ENCODE measurements at regions of chr6 and their contacts with region 1.

Region 1: DNA sequence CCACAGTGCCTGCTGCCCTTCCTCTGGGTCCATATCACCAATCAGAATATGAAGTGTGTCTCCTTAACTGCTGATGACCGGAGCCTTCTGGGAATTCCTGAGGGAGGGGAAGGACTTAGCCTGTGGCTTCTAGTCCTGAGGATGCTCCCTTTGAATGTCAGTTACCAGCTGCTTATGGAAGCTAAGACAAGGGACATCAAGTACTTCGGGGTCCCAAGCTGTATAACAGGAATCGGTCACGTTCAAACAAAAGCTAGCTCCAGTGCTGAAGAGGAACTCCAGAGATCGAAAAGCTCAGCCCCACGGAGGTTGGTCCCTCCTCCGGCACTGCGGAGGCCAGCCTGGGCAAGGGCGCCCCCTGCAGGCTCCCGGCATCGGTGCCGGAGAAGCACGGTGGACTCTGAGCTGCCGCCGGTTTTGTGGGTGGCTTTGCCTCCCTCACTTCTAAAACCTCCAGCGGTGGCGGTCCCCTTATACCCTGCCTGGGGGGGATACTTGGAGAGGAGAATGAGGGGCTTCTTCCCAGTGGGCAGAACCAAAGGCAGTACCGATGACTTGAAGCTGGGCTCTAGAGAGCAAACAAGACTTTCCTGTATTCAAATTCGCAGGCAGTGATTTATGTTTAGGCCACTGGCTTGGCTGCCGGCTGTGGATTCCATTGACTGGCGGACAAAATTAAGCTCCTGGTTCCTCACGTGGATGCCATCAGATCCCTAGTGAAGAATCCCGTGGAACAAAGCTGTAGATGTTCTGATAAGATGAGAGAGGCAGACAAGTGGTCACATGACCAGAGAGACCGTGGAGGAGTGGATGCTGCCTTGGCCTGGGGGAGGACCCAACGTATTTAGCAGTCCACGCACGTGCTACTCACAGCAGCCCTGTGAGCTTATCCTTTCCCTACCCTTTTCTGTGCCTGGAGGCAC is 16.2 kb upstream of the UBR2 start:
- DNase-seq: no peak
- H3K4me3 ChIP-seq: peak overlapping the region; percentile 45
- H3K27me3 ChIP-seq: no peaks in the 10 kb centered on the region
- CTCF ChIP-seq: peak; percentile 100

Region 2: DNA sequence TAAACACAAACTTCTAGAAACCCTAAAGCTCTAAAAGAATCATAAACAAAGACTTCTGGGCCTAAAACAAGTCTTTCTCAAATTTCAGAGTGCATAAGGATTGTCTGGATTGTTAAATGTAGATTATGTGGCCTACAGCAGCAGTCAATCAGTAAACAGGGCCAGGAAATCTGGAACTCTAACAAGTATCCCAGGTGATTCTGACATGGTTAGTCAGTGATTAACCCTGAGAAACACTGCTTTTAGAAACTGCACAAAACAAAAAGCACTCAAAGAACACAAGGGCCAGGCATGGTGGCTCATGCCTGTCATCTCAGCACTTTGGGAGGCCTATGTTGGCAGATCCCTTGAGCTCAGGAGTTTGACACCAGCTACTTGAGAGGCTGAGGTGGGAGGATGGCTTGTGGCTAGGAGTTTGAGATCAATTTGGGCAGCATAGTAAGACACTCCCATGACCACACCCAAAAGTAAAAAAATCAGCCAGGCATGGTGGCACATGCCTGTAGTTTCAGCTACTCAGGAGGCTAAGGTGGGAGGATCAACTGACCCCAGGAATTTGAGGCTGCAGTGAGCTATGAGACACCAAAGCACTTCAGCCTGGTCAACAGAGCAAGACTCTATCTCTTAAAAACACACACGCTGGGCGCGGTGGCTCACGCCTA is 632.7 kb before region 1 on chr6:
- CTCF ChIA-PET with region 1: no interaction called
- POLR2A ChIA-PET with region 1: no interaction called
- DNase-seq: no peak
- H3K4me3 ChIP-seq: no peak overlapping the region
- H3K27me3 ChIP-seq: no peaks in the 10 kb centered on the region
- CTCF ChIP-seq: no peak

Region 3: DNA sequence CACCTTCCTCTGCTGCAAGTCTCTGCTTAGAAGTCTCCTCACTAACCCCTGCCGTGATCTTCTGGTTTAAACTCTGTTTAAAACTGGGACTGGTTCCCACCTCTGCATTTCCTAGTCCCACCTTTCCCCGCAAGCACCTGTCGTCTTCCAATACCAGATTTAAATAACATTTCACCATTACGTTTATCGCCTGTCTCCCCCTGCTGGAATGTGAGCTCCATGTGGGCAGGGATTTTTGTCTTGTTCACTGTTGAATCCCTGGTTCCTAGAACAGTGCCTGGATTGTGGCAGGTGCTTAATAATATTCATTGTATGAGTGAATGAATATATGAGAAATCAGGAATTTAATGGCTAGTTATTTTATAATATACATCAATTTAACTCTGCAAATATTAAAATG is 371.8 kb before region 1 on chr6:
- CTCF ChIA-PET with region 1: no interaction called
- POLR2A ChIA-PET with region 1: no interaction called
- DNase-seq: no peak
- H3K4me3 ChIP-seq: no peak overlapping the region
- H3K27me3 ChIP-seq: no peaks in the 10 kb centered on the region
- CTCF ChIP-seq: peak; percentile 20; the same call in 1 of the 2 replicates

Region 4: GRCh38 chr6:42217519-42218367 is 329.9 kb before region 1 on chr6 and contains the start of gene MRPS10:
- CTCF ChIA-PET with region 1: interaction called, 22 read pairs
- POLR2A ChIA-PET with region 1: interaction called, 3 read pairs
- DNase-seq: peak; percentile 57
- H3K4me3 ChIP-seq: peak within 1 kb of the TSS; percentile 83
- H3K27me3 ChIP-seq: no peaks in the 10 kb centered on the region
- CTCF ChIP-seq: no peak
- polyA plus RNA-seq, gene MRPS10: 26.4 and 43.3 TPM in 2 replicates

Region 5: GRCh38 chr6:42315991-42316378 is 231.7 kb before region 1 on chr6:
- CTCF ChIA-PET with region 1: interaction called, 12 read pairs
- POLR2A ChIA-PET with region 1: no interaction called
- DNase-seq: peak; percentile 91
- H3K4me3 ChIP-seq: no peak overlapping the region
- H3K27me3 ChIP-seq: no peaks in the 10 kb centered on the region
- CTCF ChIP-seq: no peak

Region 6: DNA sequence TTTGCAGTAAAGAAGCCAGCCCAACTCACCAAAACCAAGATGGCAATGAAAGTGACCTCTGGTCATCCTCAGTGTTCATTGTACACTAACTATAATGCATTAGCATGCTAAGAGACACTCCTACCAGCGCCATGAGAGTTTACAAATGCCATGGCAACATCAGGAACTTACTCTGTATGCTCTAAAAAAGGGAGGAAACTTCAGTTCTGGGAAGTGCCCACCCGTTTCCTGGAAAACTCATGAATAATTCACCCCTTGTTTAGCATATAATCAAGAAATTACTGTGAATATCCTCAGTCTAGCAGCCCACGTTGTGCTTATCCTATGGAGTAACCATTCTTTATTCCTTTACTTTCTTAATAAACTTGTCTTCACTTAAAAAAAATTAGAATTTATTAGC is 76.5 kb before region 1 on chr6:
- CTCF ChIA-PET with region 1: no interaction called
- POLR2A ChIA-PET with region 1: no interaction called
- DNase-seq: no peak
- H3K4me3 ChIP-seq: no peak overlapping the region
- H3K27me3 ChIP-seq: no peaks in the 10 kb centered on the region; the same call in 1 of the 2 replicates
- CTCF ChIP-seq: no peak

Region 7: DNA sequence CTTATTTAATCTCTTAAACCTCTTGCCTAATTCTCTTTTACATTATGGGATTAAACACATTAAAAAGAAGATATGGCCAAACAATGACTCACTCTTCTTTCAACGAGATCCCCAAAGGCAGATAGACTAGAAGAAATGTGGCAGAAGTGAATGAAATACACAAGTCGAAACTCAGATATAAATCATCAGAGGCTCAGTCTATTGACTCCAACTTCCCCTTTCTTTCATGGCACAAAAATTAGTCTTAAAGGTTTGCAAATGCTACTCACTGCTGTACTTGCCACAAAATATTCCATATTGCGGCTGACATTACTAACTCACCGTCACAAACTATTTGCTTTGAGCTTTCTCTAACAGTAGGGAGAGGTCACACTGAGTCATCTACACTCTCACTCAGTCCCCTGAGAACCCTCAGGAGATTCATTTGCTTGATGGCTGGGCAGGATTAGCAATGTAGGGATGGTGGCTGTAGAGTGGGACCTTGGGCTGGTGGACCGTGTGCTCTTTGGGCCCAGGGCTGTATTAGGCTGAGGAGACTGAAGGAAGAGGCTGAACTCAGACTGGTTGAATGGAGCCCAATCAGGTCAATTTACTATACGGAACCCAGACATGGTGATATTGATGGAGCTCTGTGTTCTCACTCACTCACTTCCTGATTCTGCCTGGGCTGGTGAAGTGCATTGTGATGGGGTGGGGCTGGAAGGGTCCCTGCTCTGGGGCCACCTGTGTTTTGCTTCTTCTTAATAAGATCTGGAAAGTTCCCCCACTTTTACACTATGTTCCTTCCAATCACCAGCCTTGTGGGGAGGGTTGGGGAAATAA is 26.7 kb before region 1 on chr6:
- CTCF ChIA-PET with region 1: interaction called, 10 read pairs
- POLR2A ChIA-PET with region 1: no interaction called
- DNase-seq: no peak
- H3K4me3 ChIP-seq: no peak overlapping the region
- H3K27me3 ChIP-seq: no peaks in the 10 kb centered on the region
- CTCF ChIP-seq: no peak

Region 8: GRCh38 chr6:42537536-42537935 is 10.1 kb before region 1 on chr6:
- CTCF ChIA-PET with region 1: interaction called, 34 read pairs
- POLR2A ChIA-PET with region 1: no interaction called
- DNase-seq: no peak
- H3K4me3 ChIP-seq: no peak overlapping the region
- H3K27me3 ChIP-seq: no peaks in the 10 kb centered on the region
- CTCF ChIP-seq: no peak